ENCODE measurements at regions of chr10 and their contacts with region 1.

Region 1: DNA sequence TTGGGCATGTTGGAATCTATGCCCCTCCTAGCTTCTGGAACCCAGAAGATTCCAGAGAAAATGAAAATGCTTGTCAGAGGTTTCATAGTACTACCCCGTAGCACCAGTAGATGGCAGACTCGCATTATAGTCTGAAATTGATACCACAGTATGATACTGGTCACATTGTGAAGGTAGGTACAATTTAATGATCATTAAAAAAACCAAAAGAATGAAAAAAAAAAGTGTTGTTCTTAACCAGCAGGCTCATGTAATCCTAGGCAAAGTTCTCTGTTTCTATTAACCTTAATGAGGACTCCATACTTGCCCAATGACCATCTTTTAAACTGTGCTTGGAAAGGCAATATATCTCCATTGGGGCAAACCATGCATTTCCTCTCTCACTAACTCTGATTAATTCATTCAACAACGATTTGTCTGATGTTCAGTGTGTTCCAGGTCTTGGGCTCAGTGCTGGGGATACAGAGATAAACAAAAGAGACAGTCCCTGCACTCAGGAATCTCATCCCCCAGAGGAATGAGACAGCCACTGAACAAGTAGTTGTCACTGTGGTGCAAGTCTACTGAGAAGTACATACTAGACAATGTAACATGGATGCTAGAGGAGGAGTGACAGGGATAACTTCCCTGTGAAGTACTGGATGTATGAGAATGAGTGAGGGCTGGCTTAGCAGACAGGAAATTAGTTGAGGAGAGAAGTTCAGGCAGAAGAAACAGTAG is 223.5 kb upstream of the PHYHIPL start:
- DNase-seq: peak in 1 of 2 donors; percentile 46
- ATAC-seq: peak; percentile 67 to 80 (median 72)
- H3K4me3 ChIP-seq: no peak overlapping the region
- H3K27ac ChIP-seq: peak overlapping the region in 8 of 10 donors; percentile 1 to 63 (median 46)
- H3K4me1 ChIP-seq: peaks cover 0 to 5% (median 0%) of the 10 kb centered on the region in 9 donors
- H3K27me3 ChIP-seq: no peaks in the 10 kb centered on the region
- CTCF ChIP-seq: peak; percentile 67 to 90 (median 78)

Region 2: DNA sequence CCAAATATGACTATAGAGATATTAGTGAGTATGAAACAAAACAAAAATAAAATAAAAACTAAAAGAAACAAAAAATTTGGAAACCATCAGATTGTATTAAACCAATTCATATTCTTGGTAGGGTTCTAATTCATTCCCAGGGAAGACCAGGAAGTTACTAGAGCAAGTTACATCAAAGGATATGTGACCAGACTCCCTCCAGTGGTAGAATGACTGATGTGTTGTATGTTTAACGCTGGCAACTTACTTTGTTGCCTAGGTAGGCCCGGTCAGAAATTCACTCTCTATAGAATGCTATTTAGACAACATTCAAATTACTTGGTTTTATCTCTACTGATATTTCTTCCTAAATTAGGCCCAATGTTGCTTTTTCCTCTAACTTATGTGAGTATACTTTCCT is 228.8 kb after region 1 on chr10:
- intact Hi-C with region 1: loop called (anchors 1 to 5 kb)
- DNase-seq: peak in 1 of 2 donors; percentile 22
- ATAC-seq: peak in 5 of 8 donors; percentile 67 to 78 (median 67)
- H3K4me3 ChIP-seq: no peak overlapping the region
- H3K27ac ChIP-seq: no peak overlapping the region
- H3K4me1 ChIP-seq: peaks cover 0 to 10% (median 5%) of the 10 kb centered on the region in 9 donors
- H3K27me3 ChIP-seq: peaks cover 0 to 29% (median 27%) of the 10 kb centered on the region in 7 donors
- CTCF ChIP-seq: peak; percentile 33 to 74 (median 62)

Region 3: GRCh38 chr10:59580026-59580863 is 627.3 kb after region 1 on chr10:
- intact Hi-C with region 1: loop called in 1 of 10 experiments (anchors 10 kb)
- DNase-seq: no peak
- ATAC-seq: peak in 5 of 8 donors; percentile 54 to 59 (median 56)
- H3K4me3 ChIP-seq: no peak overlapping the region
- H3K27ac ChIP-seq: peak overlapping the region in 3 of 10 donors; percentile 11 to 35 (median 24)
- H3K4me1 ChIP-seq: peaks cover 0 to 29% (median 0%) of the 10 kb centered on the region in 9 donors
- H3K27me3 ChIP-seq: no peaks in the 10 kb centered on the region
- CTCF ChIP-seq: peak; percentile 4 to 79 (median 52)

Measured in heart right ventricle (tissue), 16 donors.